Sciatic nerve (tissue), 2 donors: ENCODE measurements at regions of chr11 and their contacts with region 1.

Region 1: DNA sequence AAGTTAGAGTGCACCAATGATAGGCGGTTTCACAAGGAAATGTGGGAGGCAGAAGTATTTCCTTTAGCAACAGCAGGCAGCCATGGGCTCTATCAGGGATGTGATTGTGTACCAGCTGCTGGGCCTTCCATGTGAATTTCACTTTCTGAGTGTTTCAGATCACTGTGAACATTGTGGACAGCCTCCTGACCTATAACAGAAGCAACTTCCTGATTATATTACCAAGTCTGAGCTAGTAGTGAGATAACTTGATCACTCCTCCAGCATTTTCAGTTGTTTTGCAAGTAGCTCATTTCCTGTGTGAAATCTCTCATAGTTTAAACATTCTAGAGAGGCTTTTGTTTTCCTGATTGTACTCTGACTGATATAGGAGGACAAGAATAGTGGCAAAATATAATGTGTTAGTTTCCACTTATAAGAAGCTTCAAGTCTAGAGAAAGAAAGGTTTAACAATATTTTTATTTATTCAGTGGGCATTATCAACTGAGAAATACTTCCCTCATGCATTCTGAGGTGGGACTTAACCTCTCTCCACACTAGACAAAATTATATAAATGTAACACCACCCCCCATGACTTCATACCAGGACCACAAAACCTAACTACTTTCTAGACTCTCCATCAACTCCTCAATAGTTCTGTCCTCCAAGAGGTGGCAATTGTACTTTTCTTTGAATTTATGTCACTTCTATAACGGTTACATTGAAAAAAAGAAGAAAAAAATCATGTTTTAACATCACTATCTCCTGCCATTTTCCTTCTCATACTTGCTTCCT is 184.2 kb upstream of the LUZP2 start:
- DNase-seq: no peak
- ATAC-seq: no peak

Region 2: DNA sequence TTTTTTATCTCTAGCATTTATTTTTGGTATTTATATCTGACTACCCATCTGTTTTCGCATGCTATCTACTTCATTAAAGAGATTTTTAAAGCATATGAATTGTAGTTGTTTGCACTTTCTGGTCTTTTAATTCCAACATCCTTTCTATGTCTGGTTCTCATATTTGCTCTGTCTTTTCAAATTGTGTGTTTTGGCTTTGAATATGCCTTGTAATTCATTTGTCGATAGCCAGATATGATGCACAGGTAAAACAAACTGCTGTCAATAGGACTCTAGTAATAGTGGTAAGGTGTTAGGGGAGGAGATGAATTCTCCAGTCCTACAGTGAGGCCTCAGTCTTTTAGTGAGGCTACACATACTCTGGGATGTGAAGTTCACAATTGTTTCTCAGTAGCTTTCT is 921.6 kb before region 1 on chr11:
- intact Hi-C with region 1: loop called (anchors 5 kb)
- DNase-seq: no peak
- ATAC-seq: no peak